ENCODE measurements at regions of chr14 and their contacts with region 1.

Region 1: DNA sequence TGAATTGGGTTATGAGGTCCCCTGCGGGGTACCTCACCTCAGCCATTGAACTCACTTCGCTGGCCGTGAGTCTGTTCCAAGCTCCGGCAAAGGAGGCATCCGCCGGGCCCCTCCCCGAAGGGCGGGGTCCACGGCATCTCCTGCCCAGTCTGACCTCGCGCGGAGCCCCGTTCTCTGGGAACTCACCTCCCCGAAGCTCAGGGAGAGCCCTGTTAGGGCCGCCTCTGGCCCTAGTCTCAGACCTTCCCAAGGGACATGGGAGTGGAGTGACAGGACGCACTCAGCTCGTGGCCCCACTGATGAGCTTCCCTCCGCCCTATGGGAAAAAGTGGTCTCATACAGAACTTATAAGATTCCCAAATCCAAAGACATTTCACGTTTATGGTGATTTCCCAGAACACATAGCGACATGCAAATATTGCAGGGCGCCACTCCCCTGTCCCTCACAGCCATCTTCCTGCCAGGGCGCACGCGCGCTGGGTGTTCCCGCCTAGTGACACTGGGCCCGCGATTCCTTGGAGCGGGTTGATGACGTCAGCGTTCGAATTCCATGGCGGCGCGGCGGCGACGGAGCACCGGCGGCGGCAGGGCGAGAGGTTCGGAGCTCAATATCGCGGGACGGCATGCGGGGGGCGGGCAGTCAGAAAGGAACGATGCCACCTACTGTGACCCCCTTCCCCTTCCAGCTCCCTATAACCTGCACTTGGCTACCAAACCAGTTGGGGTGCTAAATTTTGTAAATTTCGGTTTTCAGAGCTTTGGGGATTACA is at the start of gene PARP2:
- DNase-seq: peak; percentile 99
- ATAC-seq: peak; percentile 96
- H3K4me3 ChIP-seq: peak within 1 kb of the TSS; percentile 84
- H3K27ac ChIP-seq: peak within 1 kb of the TSS; percentile 71
- H3K4me1 ChIP-seq: no peaks in the 10 kb centered on the region
- H3K27me3 ChIP-seq: 0 out of 2 replicates have a peak, but pooled peaks cover 2% of the 10 kb centered on the region
- CTCF ChIP-seq: no peak
- POLR2A ChIP-seq: peak; percentile 99
- RAD21 ChIP-seq: no peak
- total RNA-seq, gene PARP2: 11.7 TPM in 2 replicates

Region 2: DNA sequence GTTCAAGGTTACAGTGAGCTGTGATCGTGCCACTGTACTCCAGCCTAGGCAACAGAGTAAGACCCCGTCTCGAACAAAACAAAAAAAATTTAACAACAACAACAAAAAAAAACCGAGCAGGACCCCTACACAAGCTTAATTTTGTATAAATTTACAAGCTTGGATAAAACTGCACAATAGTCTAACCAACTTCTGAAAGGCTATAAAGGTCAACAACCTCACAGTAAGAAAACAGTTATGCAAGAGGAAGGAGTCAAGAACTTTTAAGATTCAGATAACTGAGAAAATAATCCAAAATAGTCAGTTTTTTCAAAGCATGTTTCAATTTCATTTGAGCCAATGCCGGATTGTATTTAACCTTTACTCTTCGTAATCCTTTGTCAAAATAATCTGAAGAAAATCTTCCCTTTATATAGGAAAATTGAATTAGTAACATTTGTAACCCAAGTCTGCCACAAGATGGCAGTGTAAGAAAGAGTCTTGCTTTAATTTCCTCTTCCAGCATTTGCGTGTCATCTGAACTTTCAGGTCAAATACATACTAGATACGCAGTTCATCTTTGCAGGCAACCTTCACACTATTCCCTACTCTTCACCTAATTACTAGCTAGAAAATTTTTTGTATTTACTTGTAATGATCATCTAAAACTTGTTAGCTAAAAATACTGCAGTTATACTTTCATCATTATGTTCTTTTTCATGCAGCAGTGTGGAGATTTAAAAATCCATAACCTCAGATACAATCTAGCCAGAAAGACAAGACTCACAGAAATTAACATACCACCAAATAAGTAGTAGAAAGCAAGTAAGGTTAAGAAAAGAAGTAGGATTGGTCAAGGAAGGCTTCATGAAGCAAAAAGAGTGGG is 16.0 kb before region 1 on chr14:
- CTCF ChIA-PET with region 1: interaction called, 17 read pairs
- POLR2A ChIA-PET with region 1: interaction called, 3 read pairs
- dilution Hi-C with region 1: no loop called
- in situ Hi-C with region 1: no loop called
- intact Hi-C with region 1: no loop called
- DNase-seq: peak; percentile 72
- ATAC-seq: peak; percentile 91
- H3K4me3 ChIP-seq: no peak overlapping the region
- H3K27ac ChIP-seq: no peak overlapping the region
- H3K4me1 ChIP-seq: no peaks in the 10 kb centered on the region
- H3K27me3 ChIP-seq: no peaks in the 10 kb centered on the region
- CTCF ChIP-seq: peak; percentile 76
- POLR2A ChIP-seq: no peak
- RAD21 ChIP-seq: peak; percentile 76

Region 3: GRCh38 chr14:20454516-20455354 is 111.5 kb after region 1 on chr14 and contains the starts of genes APEX1 and OSGEP:
- CTCF ChIA-PET with region 1: no interaction called
- POLR2A ChIA-PET with region 1: no interaction called
- dilution Hi-C with region 1: no loop called
- in situ Hi-C with region 1: no loop called
- intact Hi-C with region 1: loop called (anchors 1 kb)
- DNase-seq: peak; percentile 99
- ATAC-seq: peak; percentile 90
- H3K4me3 ChIP-seq: peak within 1 kb of the TSS; percentile 62
- H3K27ac ChIP-seq: peak within 1 kb of the TSS; percentile 80
- H3K4me1 ChIP-seq: no peaks in the 10 kb centered on the region
- H3K27me3 ChIP-seq: no peaks in the 10 kb centered on the region
- CTCF ChIP-seq: no peak
- POLR2A ChIP-seq: peak; percentile 87
- RAD21 ChIP-seq: no peak
- total RNA-seq, gene APEX1: 125 and 141 TPM in 2 replicates
- total RNA-seq, gene OSGEP: 32.4 and 38.0 TPM in 2 replicates

Region 4: GRCh38 chr14:20489093-20489994 is 146.1 kb after region 1 on chr14:
- CTCF ChIA-PET with region 1: no interaction called
- POLR2A ChIA-PET with region 1: no interaction called
- dilution Hi-C with region 1: no loop called
- in situ Hi-C with region 1: no loop called
- intact Hi-C with region 1: no loop called
- DNase-seq: peak; percentile 28
- ATAC-seq: no peak
- H3K4me3 ChIP-seq: no peak overlapping the region
- H3K27ac ChIP-seq: no peak overlapping the region
- H3K4me1 ChIP-seq: no peaks in the 10 kb centered on the region; the same call in 1 of the 2 replicates
- H3K27me3 ChIP-seq: no peaks in the 10 kb centered on the region; the same call in none of the 2 replicates
- CTCF ChIP-seq: no peak
- POLR2A ChIP-seq: no peak
- RAD21 ChIP-seq: no peak

Region 5: DNA sequence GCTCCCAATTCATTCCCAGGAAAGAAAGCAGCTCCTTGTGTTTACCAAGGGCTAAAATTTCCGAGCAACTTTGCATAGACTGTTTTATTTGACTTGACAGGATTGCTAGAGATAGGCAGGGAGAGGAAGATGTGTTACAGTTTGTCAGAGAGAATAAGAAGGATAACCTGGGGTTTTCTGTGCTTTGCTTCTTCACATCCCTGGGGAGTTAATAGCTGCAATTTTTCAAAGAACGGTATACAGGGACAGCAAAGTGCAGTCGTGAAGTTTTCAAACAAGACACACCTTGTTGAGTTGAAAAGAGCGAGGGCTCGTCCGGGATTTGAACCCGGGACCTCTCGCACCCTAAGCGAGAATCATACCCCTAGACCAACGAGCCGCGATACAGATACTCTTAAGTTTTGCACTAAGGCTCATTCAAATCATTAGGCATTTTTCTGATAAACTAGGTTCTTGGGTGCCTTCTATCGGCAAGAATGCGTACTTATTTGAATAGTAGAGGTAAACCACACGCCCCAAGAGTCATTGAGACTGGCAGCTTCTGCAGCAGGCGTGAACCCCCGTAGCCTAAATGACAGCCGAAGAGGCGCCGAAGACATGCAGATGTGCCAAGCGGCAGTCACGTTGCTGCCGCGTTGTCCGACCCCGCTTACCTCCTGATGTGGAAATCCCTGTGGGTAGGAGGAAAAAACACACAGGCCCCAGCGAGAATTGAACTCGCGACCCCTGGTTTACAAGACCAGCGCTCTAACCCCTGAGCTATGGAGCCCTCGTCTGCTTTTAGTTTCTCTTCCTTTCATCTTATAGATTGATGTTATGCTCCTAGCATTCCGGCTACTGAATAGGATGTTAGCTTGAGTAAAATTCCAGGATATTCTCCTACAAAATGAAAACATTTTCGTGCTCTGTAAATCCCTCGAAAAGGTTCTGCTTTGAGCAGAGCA is 270.1 kb after region 1 on chr14:
- CTCF ChIA-PET with region 1: no interaction called
- POLR2A ChIA-PET with region 1: no interaction called
- dilution Hi-C with region 1: no loop called
- in situ Hi-C with region 1: loop called (anchors 5 kb)
- intact Hi-C with region 1: loop called (anchors 2 kb)
- DNase-seq: peak; percentile 99
- ATAC-seq: peak; percentile 84
- H3K4me3 ChIP-seq: peak overlapping the region; percentile 80
- H3K27ac ChIP-seq: no peak overlapping the region
- H3K4me1 ChIP-seq: no peaks in the 10 kb centered on the region
- H3K27me3 ChIP-seq: no peaks in the 10 kb centered on the region
- CTCF ChIP-seq: peak; percentile 84
- POLR2A ChIP-seq: no peak
- RAD21 ChIP-seq: 0 out of 2 replicates have a peak, but pooled peaks have one; percentile 15

Region 6: DNA sequence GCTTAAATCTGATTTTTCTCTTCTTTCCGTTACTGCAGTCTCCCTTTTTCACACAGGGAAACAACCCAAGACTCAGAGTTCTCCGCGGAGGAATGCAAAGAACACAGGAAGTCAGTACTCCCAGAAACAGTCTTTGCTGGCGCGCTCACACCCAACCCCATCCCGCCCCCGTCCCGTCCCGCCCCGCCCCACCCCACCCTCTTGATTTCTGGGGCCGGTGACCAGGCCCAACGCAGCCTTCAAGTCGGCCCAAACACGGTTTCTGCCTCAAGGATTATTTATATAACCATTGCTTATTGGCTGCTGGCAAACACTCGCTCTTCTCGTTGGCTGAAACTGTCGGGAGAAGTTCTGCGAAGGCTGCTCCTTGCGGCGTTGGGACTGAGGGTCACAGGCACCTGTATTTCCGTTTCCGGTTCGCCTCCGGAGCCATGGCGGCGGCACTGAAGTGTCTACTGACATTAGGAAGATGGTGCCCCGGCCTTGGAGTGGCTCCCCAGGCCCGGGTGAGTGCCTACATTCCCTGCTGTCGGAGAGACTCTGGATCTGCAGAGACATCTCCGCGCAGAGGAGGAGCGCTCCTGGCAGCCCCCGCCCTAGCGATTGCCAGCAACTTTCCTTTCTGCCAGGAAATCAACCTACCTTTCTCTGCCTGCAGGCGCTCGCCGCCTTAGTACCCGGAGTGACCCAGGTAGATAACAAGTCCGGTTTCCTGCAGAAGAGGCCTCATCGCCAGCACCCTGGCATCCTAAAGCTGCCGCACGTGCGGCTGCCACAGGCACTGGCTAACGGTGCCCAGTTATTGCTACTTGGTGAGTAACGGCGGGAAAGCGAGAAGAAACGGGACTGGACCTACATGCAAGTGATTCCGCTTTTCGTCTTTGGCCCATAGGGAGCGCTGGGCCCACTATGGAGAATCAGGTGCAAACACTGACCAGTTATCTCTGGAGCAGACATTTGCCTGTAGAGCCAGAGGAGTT is 646.6 kb after region 1 on chr14 and contains the start of gene METTL17:
- CTCF ChIA-PET with region 1: no interaction called
- POLR2A ChIA-PET with region 1: no interaction called
- dilution Hi-C with region 1: no loop called
- in situ Hi-C with region 1: loop called (anchors 25 kb)
- intact Hi-C with region 1: no loop called
- DNase-seq: peak; percentile 97
- ATAC-seq: peak; percentile 90
- H3K4me3 ChIP-seq: peak within 1 kb of the TSS; percentile 86
- H3K27ac ChIP-seq: peak within 1 kb of the TSS; percentile 74
- H3K4me1 ChIP-seq: peaks cover 8% of the 10 kb centered on the region
- H3K27me3 ChIP-seq: no peaks in the 10 kb centered on the region
- CTCF ChIP-seq: peak; percentile 36
- POLR2A ChIP-seq: peak; percentile 75
- RAD21 ChIP-seq: 0 out of 2 replicates have a peak, but pooled peaks have one; percentile 26
- total RNA-seq, gene METTL17: 25.0 and 32.8 TPM in 2 replicates

Region 7: DNA sequence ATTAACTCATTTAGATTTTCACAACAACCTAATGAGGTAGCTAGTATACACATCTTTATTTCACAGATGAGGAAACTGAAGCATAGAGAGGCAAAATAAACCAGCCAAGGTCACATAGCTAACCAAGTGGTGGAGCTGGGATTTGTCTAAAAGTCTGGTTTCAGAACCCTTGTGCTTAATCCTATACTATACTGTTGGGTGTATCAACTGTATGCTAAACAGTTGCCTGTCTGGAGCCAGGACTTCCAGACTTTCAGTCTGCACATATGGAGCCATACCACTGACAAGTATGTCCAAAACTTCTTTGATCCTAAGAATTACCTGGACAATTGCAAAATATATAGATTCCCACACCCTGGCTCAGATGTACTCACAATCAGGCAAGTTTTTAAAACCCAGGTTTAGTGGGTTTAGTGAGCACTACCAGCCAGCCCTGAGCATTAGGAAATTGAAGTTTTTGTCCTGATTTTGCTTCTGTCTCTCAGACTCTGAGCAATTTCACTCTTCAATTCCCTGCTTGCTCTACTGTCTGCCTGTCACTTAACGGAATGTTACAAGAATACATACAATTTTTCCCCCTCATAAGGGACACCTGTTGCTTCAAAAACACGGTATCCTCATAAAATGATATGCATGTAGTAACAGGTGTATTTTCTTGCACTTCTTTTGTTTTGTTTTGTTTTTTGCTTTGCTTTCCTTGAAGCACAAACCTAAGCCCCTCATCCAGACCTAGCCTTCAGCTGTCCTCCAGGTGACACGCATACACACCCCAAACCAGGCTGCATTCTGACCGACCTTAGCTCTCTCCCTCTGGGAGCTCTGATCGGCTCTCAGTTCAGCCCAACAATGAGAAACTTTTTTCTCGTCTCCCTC is 1192.5 kb after region 1 on chr14:
- CTCF ChIA-PET with region 1: no interaction called
- POLR2A ChIA-PET with region 1: interaction called, 11 read pairs
- dilution Hi-C with region 1: no loop called
- in situ Hi-C with region 1: no loop called
- intact Hi-C with region 1: no loop called
- DNase-seq: no peak
- ATAC-seq: no peak
- H3K4me3 ChIP-seq: no peak overlapping the region
- H3K27ac ChIP-seq: no peak overlapping the region
- H3K4me1 ChIP-seq: no peaks in the 10 kb centered on the region
- H3K27me3 ChIP-seq: peaks cover 49% of the 10 kb centered on the region
- CTCF ChIP-seq: no peak
- POLR2A ChIP-seq: no peak
- RAD21 ChIP-seq: no peak

Measured in IMR-90 (cell line).